H1 (cell line): ENCODE measurements at regions of chr1 and their contacts with region 1.

Region 1: GRCh38 chr1:71930556-71930955 is 351.8 kb downstream of the NEGR1 start:
- DNase-seq: no peak
- H3K4me3 ChIP-seq: no peak overlapping the region
- H3K27ac ChIP-seq: no peak overlapping the region
- H3K4me1 ChIP-seq: no peaks in the 10 kb centered on the region
- H3K27me3 ChIP-seq: no peaks in the 10 kb centered on the region
- CTCF ChIP-seq: no peak
- EP300 ChIP-seq: no peak
- POLR2A ChIP-seq: no peak
- RAD21 ChIP-seq: no peak

Region 2: DNA sequence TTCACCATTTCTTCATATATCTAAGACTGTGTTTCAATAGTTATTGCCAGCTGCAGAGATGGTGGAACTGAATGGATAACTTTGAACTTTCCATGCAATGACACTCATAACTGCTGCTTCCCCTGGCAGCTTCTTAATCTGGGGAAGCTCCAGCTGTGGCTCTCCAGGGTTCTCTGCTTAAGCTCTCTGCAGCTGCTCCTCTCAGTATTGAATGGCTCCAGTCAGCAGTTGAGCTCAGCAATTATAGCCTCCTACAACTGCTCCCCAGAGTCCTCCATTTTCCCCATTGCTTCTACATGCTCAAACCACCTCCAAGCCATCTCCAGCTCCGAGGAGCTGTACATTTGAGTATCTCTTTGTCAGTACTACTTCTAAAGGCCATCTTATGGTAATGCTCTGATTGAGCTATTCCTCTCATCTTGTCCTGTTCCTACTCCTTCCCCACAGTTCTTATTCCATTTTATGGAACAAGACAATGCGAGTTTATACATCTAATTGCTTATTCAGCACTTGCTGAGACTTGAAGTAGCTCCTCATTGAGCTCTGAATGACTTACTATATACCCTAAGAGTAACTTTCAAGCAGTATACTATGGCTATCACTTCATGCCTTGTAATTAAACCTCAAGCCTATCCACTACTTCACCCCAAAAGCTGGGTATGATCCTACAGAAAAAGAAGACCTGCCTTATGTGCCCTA is 10.6 kb before region 1 on chr1:
- CTCF ChIA-PET with region 1: interaction called, 18 read pairs
- POLR2A ChIA-PET with region 1: no interaction called
- DNase-seq: no peak
- H3K4me3 ChIP-seq: no peak overlapping the region
- H3K27ac ChIP-seq: no peak overlapping the region
- H3K4me1 ChIP-seq: no peaks in the 10 kb centered on the region; a peak in 2 of 7 replicates
- H3K27me3 ChIP-seq: no peaks in the 10 kb centered on the region
- CTCF ChIP-seq: no peak
- EP300 ChIP-seq: no peak
- POLR2A ChIP-seq: no peak
- RAD21 ChIP-seq: no peak